Mucosa of descending colon (tissue), 3 donors: ENCODE measurements at regions of chr6 and their contacts with region 1.

Region 1: DNA sequence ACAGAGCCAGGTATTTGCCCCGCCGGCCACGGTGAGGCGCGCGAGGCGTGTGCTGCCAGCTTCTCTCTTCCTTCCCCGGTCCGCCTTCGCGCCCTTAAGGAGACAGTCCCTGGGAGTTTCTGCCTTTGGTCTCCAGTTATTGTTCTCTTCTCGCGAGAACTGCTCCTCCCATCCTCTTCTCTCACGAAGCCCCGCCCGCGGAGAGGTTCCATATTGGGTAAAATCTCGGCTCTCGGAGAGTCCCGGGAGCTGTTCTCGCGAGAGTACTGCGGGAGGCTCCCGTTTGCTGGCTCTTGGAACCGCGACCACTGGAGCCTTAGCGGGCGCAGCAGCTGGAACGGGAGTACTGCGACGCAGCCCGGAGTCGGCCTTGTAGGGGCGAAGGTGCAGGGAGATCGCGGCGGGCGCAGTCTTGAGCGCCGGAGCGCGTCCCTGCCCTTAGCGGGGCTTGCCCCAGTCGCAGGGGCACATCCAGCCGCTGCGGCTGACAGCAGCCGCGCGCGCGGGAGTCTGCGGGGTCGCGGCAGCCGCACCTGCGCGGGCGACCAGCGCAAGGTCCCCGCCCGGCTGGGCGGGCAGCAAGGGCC is at the start of gene MAPK14:
- DNase-seq: peak; percentile 99 to 100 (median 99)
- ATAC-seq: peak; percentile 95
- H3K4me3 ChIP-seq: peak within 1 kb of the TSS; percentile 99
- H3K4me1 ChIP-seq: peaks cover 11% of the 10 kb centered on the region
- CTCF ChIP-seq: peak; percentile 86
- total RNA-seq, gene MAPK14: 56.1 to 67.7 (median 63.2) TPM

Region 2: GRCh38 chr6:35879151-35879550 is 148.4 kb before region 1 on chr6:
- intact Hi-C with region 1: no loop called
- DNase-seq: no peak
- ATAC-seq: no peak
- H3K4me3 ChIP-seq: no peak overlapping the region
- H3K4me1 ChIP-seq: no peaks in the 10 kb centered on the region
- CTCF ChIP-seq: no peak

Region 3: DNA sequence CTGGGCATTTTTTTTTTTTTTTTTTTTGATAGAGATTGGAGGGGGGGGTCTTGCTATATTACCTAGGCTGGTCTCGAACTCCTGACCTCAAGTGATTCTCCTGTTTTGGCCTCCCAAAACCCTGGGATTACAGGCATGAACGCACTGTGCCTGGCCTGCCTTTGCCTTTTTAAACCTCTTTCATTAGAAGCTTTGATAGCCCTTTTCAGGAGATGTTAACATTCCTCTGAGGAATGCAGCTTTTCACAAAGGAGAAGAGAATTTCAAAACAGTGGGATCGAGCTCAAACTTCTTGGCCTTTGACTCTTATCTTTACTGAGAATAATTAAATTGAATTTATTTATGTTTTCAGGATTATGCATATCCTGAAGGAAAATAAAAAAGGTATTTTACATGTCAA is 34.4 kb before region 1 on chr6:
- intact Hi-C with region 1: no loop called
- DNase-seq: no peak
- ATAC-seq: no peak
- H3K4me3 ChIP-seq: no peak overlapping the region
- H3K4me1 ChIP-seq: no peaks in the 10 kb centered on the region
- CTCF ChIP-seq: no peak

Region 4: GRCh38 chr6:36094753-36095496 is 67.3 kb after region 1 on chr6:
- intact Hi-C with region 1: loop called (anchors 5 kb)
- DNase-seq: peak; percentile 86 to 94 (median 91)
- ATAC-seq: peak; percentile 93
- H3K4me3 ChIP-seq: no peak overlapping the region
- H3K4me1 ChIP-seq: peaks cover 24% of the 10 kb centered on the region
- CTCF ChIP-seq: peak; percentile 83

Region 5: DNA sequence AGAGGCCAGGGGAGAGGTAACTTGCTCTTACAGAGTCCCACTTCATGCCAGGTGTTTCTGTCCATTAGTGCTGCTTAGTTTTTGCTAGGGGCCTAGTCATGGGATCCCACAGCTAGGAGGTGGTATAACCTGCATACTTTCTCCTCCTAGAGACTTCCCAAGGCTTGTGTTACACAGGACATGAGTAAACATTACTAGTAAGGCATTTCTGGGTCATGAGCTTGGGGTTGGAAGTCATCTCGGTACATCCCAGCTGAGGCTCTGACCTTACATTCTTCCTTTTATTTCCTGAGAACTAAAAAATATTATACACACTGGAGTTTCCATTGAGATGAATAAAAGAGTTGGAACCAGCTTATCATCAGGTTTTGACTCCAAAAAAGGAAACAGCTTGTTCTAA is 221.4 kb after region 1 on chr6:
- intact Hi-C with region 1: no loop called
- DNase-seq: no peak
- ATAC-seq: no peak
- H3K4me3 ChIP-seq: no peak overlapping the region
- H3K4me1 ChIP-seq: peaks cover 5% of the 10 kb centered on the region
- CTCF ChIP-seq: no peak

Region 6: GRCh38 chr6:36383606-36384005 is 356.0 kb after region 1 on chr6:
- intact Hi-C with region 1: no loop called
- DNase-seq: no peak
- ATAC-seq: no peak
- H3K4me3 ChIP-seq: no peak overlapping the region
- H3K4me1 ChIP-seq: no peaks in the 10 kb centered on the region
- CTCF ChIP-seq: no peak